Body of pancreas (tissue), 4 donors: ENCODE measurements at regions of chr1 and their contacts with region 1.

Region 1: DNA sequence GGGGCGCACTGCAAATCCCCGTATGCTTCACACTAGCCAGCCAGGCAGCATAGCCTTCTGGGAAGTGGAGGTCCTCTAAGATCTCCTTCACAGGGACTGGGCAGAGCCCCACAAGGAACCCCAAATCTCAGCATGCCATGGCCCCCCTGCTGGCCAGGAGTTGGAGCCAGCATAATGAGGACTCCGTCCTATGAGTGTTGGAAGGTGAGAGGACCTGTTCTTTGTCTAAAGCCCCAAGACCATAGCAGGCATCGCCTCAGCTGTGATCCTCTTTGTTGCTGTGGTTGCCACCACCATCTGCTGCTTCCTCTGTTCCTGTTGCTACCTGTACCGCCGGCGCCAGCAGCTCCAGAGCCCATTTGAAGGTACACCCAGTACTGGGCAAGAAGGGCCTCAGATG is 1.5 kb downstream of the SHISA4 start:
- DNase-seq: no peak
- ATAC-seq: no peak
- H3K4me3 ChIP-seq: no peak overlapping the region
- H3K27ac ChIP-seq: no peak overlapping the region
- H3K4me1 ChIP-seq: peaks cover 14% of the 10 kb centered on the region
- H3K27me3 ChIP-seq: no peaks in the 10 kb centered on the region
- CTCF ChIP-seq: no peak
- POLR2A ChIP-seq: no peak

Region 2: GRCh38 chr1:201982623-201983379 is 92.6 kb after region 1 on chr1 and contains the start of gene RNPEP:
- intact Hi-C with region 1: loop called (anchors 5 kb)
- DNase-seq: peak; percentile 60 to 73 (median 70)
- ATAC-seq: peak; percentile 88
- H3K4me3 ChIP-seq: peak within 1 kb of the TSS; percentile 35 to 82
- H3K27ac ChIP-seq: peak within 1 kb of the TSS; percentile 83 to 95 (median 90)
- H3K4me1 ChIP-seq: peaks cover 12% of the 10 kb centered on the region
- H3K27me3 ChIP-seq: no peaks in the 10 kb centered on the region
- CTCF ChIP-seq: peak in 6 of 7 experiments; percentile 4 to 47 (median 19)
- POLR2A ChIP-seq: peak; percentile 66 to 70 (median 69)
- total RNA-seq, gene RNPEP: 62.3 to 233 TPM